GM12878 (cell line): ENCODE measurements at regions of chr1 and their contacts with region 1.

Region 1: GRCh38 chr1:200628223-200628881 is 7.8 kb upstream of the KIF14 start:
- DNase-seq: peak; percentile 89
- ATAC-seq: peak; percentile 82
- H3K4me3 ChIP-seq: peak overlapping the region; percentile 61
- H3K27ac ChIP-seq: peak overlapping the region; percentile 96
- H3K4me1 ChIP-seq: peaks cover 37% of the 10 kb centered on the region
- H3K27me3 ChIP-seq: no peaks in the 10 kb centered on the region
- CTCF ChIP-seq: no peak
- EP300 ChIP-seq: peak; percentile 54 to 55; a peak in 2 of 4 replicates
- POLR2A ChIP-seq: no peak
- RAD21 ChIP-seq: no peak

Region 2: GRCh38 chr1:200448034-200448762 is 180.2 kb before region 1 on chr1:
- CTCF ChIA-PET with region 1: no interaction called
- POLR2A ChIA-PET with region 1: no interaction called
- RAD21 ChIA-PET with region 1: no interaction called
- SMC1A ChIA-PET with region 1: no interaction called
- in situ Hi-C with region 1: no loop called
- intact Hi-C with region 1: no loop called
- DNase-seq: peak; percentile 81
- ATAC-seq: peak; percentile 91
- H3K4me3 ChIP-seq: no peak overlapping the region; the same call in 1 of the 2 replicates
- H3K27ac ChIP-seq: peak overlapping the region; percentile 92
- H3K4me1 ChIP-seq: peaks cover 16% of the 10 kb centered on the region; the same call in 1 of the 2 replicates
- H3K27me3 ChIP-seq: no peaks in the 10 kb centered on the region
- CTCF ChIP-seq: no peak
- EP300 ChIP-seq: peak; percentile 94 to 97
- POLR2A ChIP-seq: no peak
- RAD21 ChIP-seq: peak; percentile 4; the same call in 1 of the 2 replicates

Region 3: DNA sequence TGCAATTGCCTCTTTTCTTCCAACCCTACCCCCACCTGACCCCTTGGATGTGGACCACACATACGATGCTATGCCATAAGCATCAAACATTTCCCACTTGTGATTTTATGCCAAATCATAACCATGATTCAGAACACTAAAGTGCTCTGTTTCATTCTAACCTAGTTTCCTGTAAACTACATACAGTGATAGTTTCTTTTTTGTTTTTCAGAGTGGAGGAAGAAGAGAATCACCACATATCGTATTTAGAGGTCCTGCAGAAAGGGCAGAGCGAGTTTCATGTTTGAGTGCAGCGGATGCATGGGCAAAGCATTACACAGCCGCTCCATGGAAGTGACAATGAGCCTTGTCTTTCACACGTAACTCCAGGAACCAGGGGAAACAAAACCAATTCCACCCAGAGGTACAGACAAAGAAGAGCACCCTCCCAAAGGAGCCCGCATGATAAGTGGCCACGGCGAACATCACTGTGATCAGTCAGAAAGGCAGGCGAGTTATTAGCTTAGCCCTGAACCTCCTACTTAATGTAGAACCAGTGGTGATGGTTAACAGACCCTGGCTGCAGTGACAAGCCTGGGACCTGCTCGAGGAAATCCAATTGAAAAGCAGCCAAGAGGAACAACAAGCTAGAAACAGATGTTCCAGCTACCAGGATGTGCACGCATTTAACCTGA is 154.5 kb before region 1 on chr1:
- CTCF ChIA-PET with region 1: no interaction called
- POLR2A ChIA-PET with region 1: no interaction called
- RAD21 ChIA-PET with region 1: no interaction called
- SMC1A ChIA-PET with region 1: no interaction called
- in situ Hi-C with region 1: no loop called
- intact Hi-C with region 1: no loop called
- DNase-seq: peak; percentile 57
- ATAC-seq: peak; percentile 69
- H3K4me3 ChIP-seq: peak overlapping the region; percentile 43
- H3K27ac ChIP-seq: peak overlapping the region; percentile 78
- H3K4me1 ChIP-seq: peaks cover 36% of the 10 kb centered on the region
- H3K27me3 ChIP-seq: no peaks in the 10 kb centered on the region
- CTCF ChIP-seq: no peak
- EP300 ChIP-seq: peak in 1 of 2 experiments; percentile 29; a peak in 1 of 4 replicates
- POLR2A ChIP-seq: peak; percentile 28; the same call in 1 of the 2 replicates
- RAD21 ChIP-seq: no peak

Region 4: GRCh38 chr1:200639790-200640669 is 11.7 kb after region 1 on chr1:
- CTCF ChIA-PET with region 1: interaction called, 25 read pairs
- POLR2A ChIA-PET with region 1: interaction called, 8 read pairs
- RAD21 ChIA-PET with region 1: interaction called, 6 read pairs
- SMC1A ChIA-PET with region 1: interaction called, 19 read pairs
- in situ Hi-C with region 1: no loop called
- intact Hi-C with region 1: no loop called
- DNase-seq: no peak
- ATAC-seq: peak; percentile 99
- H3K4me3 ChIP-seq: no peak overlapping the region
- H3K27ac ChIP-seq: peak overlapping the region; percentile 78
- H3K4me1 ChIP-seq: peaks cover 9% of the 10 kb centered on the region; the same call in 1 of the 2 replicates
- H3K27me3 ChIP-seq: no peaks in the 10 kb centered on the region
- CTCF ChIP-seq: no peak
- EP300 ChIP-seq: no peak; a peak in 1 of 4 replicates
- POLR2A ChIP-seq: no peak
- RAD21 ChIP-seq: no peak

Region 5: GRCh38 chr1:200738740-200739498 is 110.6 kb after region 1 on chr1 and contains the start of gene CAMSAP2:
- CTCF ChIA-PET with region 1: interaction called, 8 read pairs
- POLR2A ChIA-PET with region 1: interaction called, 5 read pairs
- RAD21 ChIA-PET with region 1: interaction called, 7 read pairs
- SMC1A ChIA-PET with region 1: interaction called, 7 read pairs
- in situ Hi-C with region 1: no loop called
- intact Hi-C with region 1: loop called (anchors 1 kb)
- DNase-seq: no peak
- ATAC-seq: peak; percentile 75
- H3K4me3 ChIP-seq: peak within 1 kb of the TSS; percentile 99
- H3K27ac ChIP-seq: peak within 1 kb of the TSS; percentile 88
- H3K4me1 ChIP-seq: peaks cover 5% of the 10 kb centered on the region; the same call in 1 of the 2 replicates
- H3K27me3 ChIP-seq: no peaks in the 10 kb centered on the region
- CTCF ChIP-seq: no peak
- EP300 ChIP-seq: no peak
- POLR2A ChIP-seq: peak; percentile 71
- RAD21 ChIP-seq: no peak
- polyA plus RNA-seq, gene CAMSAP2: 5.0 to 6.4 TPM

Region 6: GRCh38 chr1:200802865-200803512 is 174.6 kb after region 1 on chr1:
- CTCF ChIA-PET with region 1: interaction called, 280 read pairs
- POLR2A ChIA-PET with region 1: interaction called, 10 read pairs
- RAD21 ChIA-PET with region 1: interaction called, 179 read pairs
- SMC1A ChIA-PET with region 1: interaction called, 195 read pairs
- in situ Hi-C with region 1: loop called (anchors 5 kb)
- intact Hi-C with region 1: no loop called
- DNase-seq: peak; percentile 61
- ATAC-seq: peak; percentile 98
- H3K4me3 ChIP-seq: no peak overlapping the region
- H3K27ac ChIP-seq: no peak overlapping the region
- H3K4me1 ChIP-seq: no peaks in the 10 kb centered on the region
- H3K27me3 ChIP-seq: no peaks in the 10 kb centered on the region
- CTCF ChIP-seq: peak; percentile 86 to 92 (median 92)
- EP300 ChIP-seq: no peak
- POLR2A ChIP-seq: no peak
- RAD21 ChIP-seq: peak; percentile 99

Region 7: DNA sequence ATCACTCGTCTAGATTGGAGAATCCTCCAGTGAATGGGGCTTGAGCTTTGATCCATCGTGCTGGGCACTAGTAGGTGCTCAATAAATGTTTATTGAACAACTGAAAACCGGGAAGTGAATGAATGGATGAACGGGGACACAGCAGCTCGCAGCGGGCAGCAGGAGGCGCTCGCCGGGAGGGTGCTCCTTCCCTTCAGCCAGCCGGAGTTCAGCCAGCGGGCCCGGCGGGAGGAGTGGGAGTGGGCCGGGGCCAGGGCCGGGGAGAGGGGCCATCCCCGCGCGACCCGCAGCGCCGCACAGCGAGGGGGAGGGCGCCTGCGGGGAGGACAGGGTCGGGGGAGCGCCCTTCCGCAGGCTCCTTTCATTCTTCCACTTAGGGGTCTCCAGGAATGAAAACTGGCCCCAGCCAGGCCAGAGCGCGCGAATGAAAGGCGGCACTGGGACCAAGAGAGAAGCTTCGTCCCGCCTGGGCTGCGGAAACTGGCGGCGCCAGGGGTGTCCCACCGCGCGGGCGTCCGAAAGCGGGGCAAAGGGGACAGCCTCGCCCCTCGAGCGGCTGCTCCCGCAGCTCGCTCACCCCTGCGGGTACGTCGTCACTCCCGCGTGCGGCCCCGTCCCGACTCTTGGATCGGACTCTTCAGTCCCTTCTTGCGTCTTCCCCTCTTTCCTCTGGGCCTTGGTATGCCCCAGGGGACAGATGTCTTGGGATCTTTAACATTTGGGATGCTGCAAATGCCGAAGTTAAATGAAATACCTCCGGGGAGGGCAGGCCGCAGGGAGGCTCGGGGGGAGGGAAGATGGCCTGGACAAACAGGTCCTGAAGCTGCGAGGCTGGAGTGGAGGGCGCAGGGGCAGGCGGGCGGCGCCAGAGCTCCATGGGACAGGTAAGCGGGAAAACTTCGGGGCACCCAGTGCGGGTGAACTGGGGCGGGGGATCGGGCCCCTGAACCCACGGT is 262.7 kb after region 1 on chr1:
- CTCF ChIA-PET with region 1: interaction called, 3 read pairs
- POLR2A ChIA-PET with region 1: interaction called, 7 read pairs
- RAD21 ChIA-PET with region 1: interaction called, 28 read pairs
- SMC1A ChIA-PET with region 1: interaction called, 18 read pairs
- in situ Hi-C with region 1: no loop called
- intact Hi-C with region 1: loop called (anchors 5 kb)
- DNase-seq: no peak
- ATAC-seq: peak; percentile 5
- H3K4me3 ChIP-seq: peak overlapping the region; percentile 45
- H3K27ac ChIP-seq: peak overlapping the region; percentile 69; the same call in 1 of the 2 replicates
- H3K4me1 ChIP-seq: peaks cover 61% of the 10 kb centered on the region
- H3K27me3 ChIP-seq: no peaks in the 10 kb centered on the region
- CTCF ChIP-seq: peak; percentile 42 to 58 (median 47)
- EP300 ChIP-seq: no peak
- POLR2A ChIP-seq: peak; percentile 53; the same call in 1 of the 2 replicates
- RAD21 ChIP-seq: peak; percentile 26; the same call in 1 of the 2 replicates